ENCODE measurements at regions of chr10 and their contacts with region 1.

Region 1: GRCh38 chr10:104406715-104407650 is 53.4 kb downstream of the CFAP58 start:
- DNase-seq: peak; percentile 48
- H3K27ac ChIP-seq: no peak overlapping the region
- CTCF ChIP-seq: peak; percentile 72

Region 2: DNA sequence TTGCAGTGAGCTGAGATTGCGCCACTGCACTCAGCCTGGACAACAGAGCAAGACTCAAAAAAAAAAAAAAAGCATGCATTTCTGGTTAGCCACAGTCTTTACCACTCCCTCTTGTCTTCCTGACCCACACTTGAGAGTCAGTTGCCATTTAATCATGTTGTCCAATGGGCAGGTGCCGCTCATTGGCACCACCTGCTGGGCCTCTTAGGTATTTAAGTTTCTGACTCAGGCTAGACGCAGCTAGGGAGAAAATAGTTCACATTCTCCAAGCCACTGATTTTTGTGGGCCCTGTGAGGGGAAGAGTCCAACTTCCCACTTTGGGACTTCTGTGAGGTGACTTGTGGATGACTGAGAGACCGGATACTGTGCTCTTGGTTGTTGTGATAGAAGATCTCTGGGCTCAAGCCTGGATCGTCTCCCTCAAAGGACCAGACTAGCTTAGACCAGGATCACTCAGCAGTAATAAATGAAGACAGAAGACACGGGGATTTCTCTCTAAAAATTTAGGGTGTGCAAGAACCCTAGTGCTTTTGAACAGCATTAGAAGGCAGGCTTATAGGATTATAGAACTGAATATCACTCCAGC is 207.4 kb after region 1 on chr10:
- CTCF ChIA-PET with region 1: interaction called, 15 read pairs
- POLR2A ChIA-PET with region 1: no interaction called
- DNase-seq: peak; percentile 54
- H3K27ac ChIP-seq: no peak overlapping the region
- CTCF ChIP-seq: peak; percentile 34

Region 3: GRCh38 chr10:104622598-104623209 is 215.7 kb after region 1 on chr10:
- CTCF ChIA-PET with region 1: interaction called, 38 read pairs
- POLR2A ChIA-PET with region 1: no interaction called
- DNase-seq: peak; percentile 78
- H3K27ac ChIP-seq: no peak overlapping the region
- CTCF ChIP-seq: peak; percentile 38

Measured in RWPE1 (cell line).